ENCODE measurements at regions of chr12 and their contacts with region 1.

Region 1: GRCh38 chr12:4648501-4649357 is at the starts of genes AKAP3 and NDUFA9:
- DNase-seq: peak; percentile 83
- ATAC-seq: peak; percentile 99
- H3K4me3 ChIP-seq: peak within 1 kb of the TSS; percentile 93
- H3K27ac ChIP-seq: peak within 1 kb of the TSS; percentile 91
- H3K4me1 ChIP-seq: no peaks in the 10 kb centered on the region
- H3K27me3 ChIP-seq: no peaks in the 10 kb centered on the region
- CTCF ChIP-seq: no peak
- POLR2A ChIP-seq: peak; percentile 71; the same call in 1 of the 2 replicates
- RAD21 ChIP-seq: no peak
- total RNA-seq, gene AKAP3: 0.54 and 0.56 TPM in 2 replicates
- total RNA-seq, gene NDUFA9: 112 and 124 TPM in 2 replicates

Region 2: GRCh38 chr12:4538207-4539160 is 110.2 kb before region 1 on chr12 and contains the start of gene RAD51AP1:
- CTCF ChIA-PET with region 1: no interaction called
- POLR2A ChIA-PET with region 1: no interaction called
- dilution Hi-C with region 1: no loop called
- in situ Hi-C with region 1: no loop called
- intact Hi-C with region 1: loop called (anchors 5 kb)
- DNase-seq: peak; percentile 97
- ATAC-seq: peak; percentile 100
- H3K4me3 ChIP-seq: peak within 1 kb of the TSS; percentile 97
- H3K27ac ChIP-seq: peak within 1 kb of the TSS; percentile 86
- H3K4me1 ChIP-seq: no peaks in the 10 kb centered on the region
- H3K27me3 ChIP-seq: no peaks in the 10 kb centered on the region
- CTCF ChIP-seq: no peak
- POLR2A ChIP-seq: no peak
- RAD21 ChIP-seq: no peak
- total RNA-seq, gene RAD51AP1: 6.5 and 15.3 TPM in 2 replicates

Region 3: DNA sequence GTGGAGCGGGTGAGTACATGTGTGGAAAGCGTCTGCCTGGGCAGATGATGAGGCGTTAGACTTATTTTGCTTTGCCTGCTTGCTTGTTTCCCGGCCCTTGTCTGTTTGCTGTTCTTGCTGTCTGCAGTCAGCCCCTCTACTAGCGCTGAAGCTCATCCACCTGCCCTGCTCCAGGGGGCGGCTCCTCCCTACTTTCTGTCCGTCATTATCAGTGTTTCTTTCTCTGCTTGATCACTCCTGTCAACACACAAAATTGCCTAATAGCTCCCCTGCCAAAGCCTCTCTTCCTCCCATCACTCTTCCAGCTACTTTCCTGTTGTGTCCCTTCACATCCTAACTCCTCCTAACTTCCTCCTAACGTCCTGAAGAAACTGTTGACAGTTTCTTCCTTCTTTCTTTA is 36.6 kb after region 1 on chr12:
- CTCF ChIA-PET with region 1: no interaction called
- POLR2A ChIA-PET with region 1: no interaction called
- dilution Hi-C with region 1: no loop called
- in situ Hi-C with region 1: no loop called
- intact Hi-C with region 1: no loop called
- DNase-seq: no peak
- ATAC-seq: no peak
- H3K4me3 ChIP-seq: no peak overlapping the region
- H3K27ac ChIP-seq: no peak overlapping the region
- H3K4me1 ChIP-seq: no peaks in the 10 kb centered on the region
- H3K27me3 ChIP-seq: no peaks in the 10 kb centered on the region
- CTCF ChIP-seq: no peak
- POLR2A ChIP-seq: no peak
- RAD21 ChIP-seq: no peak

Region 4: GRCh38 chr12:5003020-5003666 is 354.4 kb after region 1 on chr12:
- CTCF ChIA-PET with region 1: no interaction called
- POLR2A ChIA-PET with region 1: no interaction called
- dilution Hi-C with region 1: no loop called
- in situ Hi-C with region 1: no loop called
- intact Hi-C with region 1: no loop called
- DNase-seq: peak; percentile 50
- ATAC-seq: peak; percentile 98
- H3K4me3 ChIP-seq: no peak overlapping the region
- H3K27ac ChIP-seq: no peak overlapping the region
- H3K4me1 ChIP-seq: no peaks in the 10 kb centered on the region
- H3K27me3 ChIP-seq: peaks cover 13% of the 10 kb centered on the region
- CTCF ChIP-seq: peak; percentile 95
- POLR2A ChIP-seq: no peak
- RAD21 ChIP-seq: peak; percentile 95

Region 5: GRCh38 chr12:5083955-5084849 is 435.5 kb after region 1 on chr12:
- CTCF ChIA-PET with region 1: no interaction called
- POLR2A ChIA-PET with region 1: no interaction called
- dilution Hi-C with region 1: no loop called
- in situ Hi-C with region 1: no loop called
- intact Hi-C with region 1: no loop called
- DNase-seq: peak; percentile 71
- ATAC-seq: peak; percentile 44
- H3K4me3 ChIP-seq: no peak overlapping the region
- H3K27ac ChIP-seq: no peak overlapping the region
- H3K4me1 ChIP-seq: peaks cover 20% of the 10 kb centered on the region
- H3K27me3 ChIP-seq: peaks cover 3% of the 10 kb centered on the region; the same call in 1 of the 2 replicates
- CTCF ChIP-seq: peak; percentile 79
- POLR2A ChIP-seq: no peak
- RAD21 ChIP-seq: peak; percentile 78